Gastrocnemius medialis (tissue), 4 donors: ENCODE measurements at regions of chr15 and their contacts with region 1.

Region 1: DNA sequence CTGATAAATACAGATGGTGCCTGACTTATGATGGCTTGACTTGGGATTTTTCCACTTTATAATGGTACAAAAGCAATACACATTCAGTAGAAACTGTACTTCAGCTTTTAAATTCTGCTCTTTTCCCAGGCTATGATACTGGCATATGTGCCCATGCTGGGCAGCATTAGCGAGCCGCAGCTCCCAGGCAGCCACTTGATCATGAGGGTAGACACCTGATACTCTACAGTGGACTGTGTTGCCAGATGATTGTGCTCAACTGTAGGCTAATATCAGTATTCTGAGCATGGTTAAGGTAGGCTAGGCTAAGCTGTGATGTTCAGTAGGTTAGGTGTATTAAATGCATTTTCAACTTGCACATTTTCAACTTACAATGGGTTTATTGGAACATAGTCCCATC is 17.7 kb upstream of the FEM1B start:
- DNase-seq: peak; percentile 66 to 67
- ATAC-seq: peak; percentile 72 to 74
- H3K4me3 ChIP-seq: no peak overlapping the region
- H3K27ac ChIP-seq: peak overlapping the region; percentile 77 to 87 (median 82)
- H3K4me1 ChIP-seq: peaks cover 25 to 27% of the 10 kb centered on the region in 2 donors
- H3K27me3 ChIP-seq: no peaks in the 10 kb centered on the region
- CTCF ChIP-seq: no peak
- POLR2A ChIP-seq: peak in 1 of 2 donors; percentile 35

Region 2: GRCh38 chr15:68271854-68272471 is 12.1 kb after region 1 on chr15:
- in situ Hi-C with region 1: no loop called
- intact Hi-C with region 1: loop called (anchors 1 kb)
- DNase-seq: peak in 1 of 2 donors; percentile 71
- ATAC-seq: peak; percentile 30 to 56
- H3K4me3 ChIP-seq: peak overlapping the region in 1 of 4 donors; percentile 7
- H3K27ac ChIP-seq: peak overlapping the region; percentile 97 to 100 (median 99)
- H3K4me1 ChIP-seq: peaks cover 58 to 62% of the 10 kb centered on the region in 2 donors
- H3K27me3 ChIP-seq: no peaks in the 10 kb centered on the region
- CTCF ChIP-seq: no peak
- POLR2A ChIP-seq: peak; percentile 18 to 64

Region 3: DNA sequence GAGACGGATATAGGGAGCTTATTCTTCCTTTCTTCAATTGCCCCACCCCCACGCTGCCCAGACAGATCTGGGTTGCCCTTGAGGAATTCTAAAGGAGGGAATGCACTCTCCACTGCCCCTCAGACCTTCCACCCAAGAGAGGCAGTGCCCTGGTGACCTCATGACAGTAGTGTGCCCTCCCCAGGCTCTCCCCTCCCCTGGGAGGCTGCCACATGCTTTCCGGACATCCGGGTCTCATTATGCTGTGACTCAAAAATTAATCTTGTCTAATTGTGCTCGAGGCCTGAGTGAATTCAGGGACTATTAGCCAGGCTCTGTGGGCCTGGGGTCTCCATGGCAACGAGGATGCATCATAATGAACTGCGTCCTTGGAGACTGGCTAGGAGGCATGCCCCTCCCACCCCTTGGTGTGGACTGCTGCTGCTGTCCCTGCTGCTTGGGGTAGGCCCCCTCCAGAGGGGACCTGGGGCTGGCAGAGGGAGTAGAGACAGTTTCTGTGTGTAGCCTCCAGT is 339.7 kb after region 1 on chr15:
- in situ Hi-C with region 1: no loop called
- intact Hi-C with region 1: no loop called
- DNase-seq: no peak
- ATAC-seq: no peak
- H3K4me3 ChIP-seq: no peak overlapping the region
- H3K27ac ChIP-seq: no peak overlapping the region
- H3K4me1 ChIP-seq: peaks cover 0 to 17% of the 10 kb centered on the region in 2 donors
- H3K27me3 ChIP-seq: no peaks in the 10 kb centered on the region
- CTCF ChIP-seq: no peak
- POLR2A ChIP-seq: no peak